ENCODE measurements at regions of chr12 and their contacts with region 1.

Region 1: DNA sequence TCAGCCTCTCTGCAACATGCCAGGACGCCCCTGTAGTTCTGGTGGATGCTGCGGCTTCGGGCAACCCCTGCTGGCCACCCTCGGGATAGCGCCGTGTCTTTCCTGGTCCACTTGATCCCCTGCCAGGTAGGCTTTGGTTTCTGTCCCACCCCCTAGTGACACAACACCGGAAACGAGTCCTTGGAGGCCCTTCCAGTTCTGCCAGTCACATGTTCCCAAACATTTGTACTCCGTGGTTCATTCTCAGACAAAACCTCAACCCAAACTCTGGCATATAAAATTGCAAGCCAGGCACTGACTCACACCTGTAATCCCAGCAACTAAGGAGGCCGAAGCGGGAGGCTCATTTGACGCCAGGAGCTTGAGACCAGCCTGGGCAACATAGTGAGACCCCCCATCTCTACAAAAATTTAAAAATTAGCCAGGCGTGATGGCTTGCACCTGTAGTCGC is 37.1 kb downstream of the RASAL1 start:
- DNase-seq: peak; percentile 79
- ATAC-seq: peak; percentile 87
- H3K4me3 ChIP-seq: no peak overlapping the region
- H3K27ac ChIP-seq: peak overlapping the region; percentile 39
- H3K4me1 ChIP-seq: peaks cover 6 to 14% of the 10 kb centered on the region in 2 experiments; a peak in 3 of 4 replicates
- H3K27me3 ChIP-seq: no peaks in the 10 kb centered on the region
- CTCF ChIP-seq: peak; percentile 86 to 93 (median 93)
- POLR2A ChIP-seq: no peak
- RAD21 ChIP-seq: peak; percentile 84

Region 2: DNA sequence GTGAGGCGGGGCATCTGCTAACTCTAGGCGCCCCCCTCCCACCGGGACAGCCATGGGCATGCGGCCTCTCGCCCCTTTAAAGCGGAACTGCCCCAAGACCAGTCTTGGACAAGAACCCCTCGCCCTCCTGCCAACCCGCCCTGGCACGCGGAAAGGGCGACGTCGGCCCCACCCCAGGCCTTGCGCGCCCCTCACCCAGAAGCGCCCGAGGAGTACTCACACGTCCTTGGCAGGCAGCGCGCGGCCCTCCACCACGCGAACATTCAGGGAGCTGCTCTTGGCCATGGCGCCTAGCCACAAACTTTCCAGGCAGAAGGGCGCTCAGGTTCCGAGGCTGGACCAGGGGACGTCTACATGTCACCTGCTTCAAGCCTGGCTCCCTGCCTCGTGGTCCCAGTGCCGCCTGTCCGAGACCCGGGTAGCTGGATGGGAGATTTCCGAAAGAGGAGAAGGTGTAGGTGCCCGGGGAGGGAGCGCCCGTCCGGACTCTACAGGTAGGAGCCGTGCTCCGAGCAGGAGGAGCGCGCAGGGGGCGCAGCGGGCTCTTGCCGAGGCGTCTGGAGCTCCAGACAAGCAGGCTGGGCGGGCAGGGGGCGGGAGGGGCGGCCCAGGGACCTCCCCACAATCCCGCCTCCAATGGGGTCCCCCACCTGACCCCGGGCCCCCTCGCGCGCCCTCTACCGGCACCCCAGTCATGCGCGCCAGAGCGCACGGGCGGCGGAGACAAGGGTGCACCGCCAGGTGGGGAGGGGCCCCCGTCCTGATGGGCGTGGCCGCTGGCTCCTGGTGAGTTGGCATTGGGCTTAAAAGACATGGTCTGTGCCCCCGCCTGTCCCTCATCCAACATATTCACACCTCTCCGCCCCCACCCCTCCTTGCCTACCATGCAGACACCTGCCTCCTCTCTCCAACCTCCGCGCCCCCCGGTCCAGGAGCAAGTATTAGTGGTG is 37.0 kb after region 1 on chr12 and contains the start of gene RASAL1:
- CTCF ChIA-PET with region 1: no interaction called
- POLR2A ChIA-PET with region 1: no interaction called
- RAD21 ChIA-PET with region 1: no interaction called
- intact Hi-C with region 1: loop called (anchors 2 kb)
- DNase-seq: peak; percentile 75
- ATAC-seq: peak; percentile 92
- H3K4me3 ChIP-seq: peak within 1 kb of the TSS; percentile 78 to 94
- H3K27ac ChIP-seq: peak within 1 kb of the TSS; percentile 72
- H3K4me1 ChIP-seq: peaks cover 13 to 34% of the 10 kb centered on the region in 2 experiments
- H3K27me3 ChIP-seq: no peaks in the 10 kb centered on the region
- CTCF ChIP-seq: peak; percentile 37 to 77 (median 65); a peak in 5 of 6 replicates
- POLR2A ChIP-seq: peak; percentile 37
- RAD21 ChIP-seq: no peak
- total RNA-seq, gene RASAL1: 16.0 TPM